ENCODE measurements at regions of chr1 and their contacts with region 1.

Region 1: GRCh38 chr1:91650764-91651163 is 150.1 kb downstream of the CDC7 start:
- DNase-seq: no peak
- ATAC-seq: no peak
- H3K4me3 ChIP-seq: no peak overlapping the region
- H3K4me3 Mint-ChIP-seq: no peak overlapping the region
- H3K27ac ChIP-seq: no peak overlapping the region
- H3K27ac Mint-ChIP-seq: no peak overlapping the region
- H3K4me1 ChIP-seq: peaks cover 8% of the 10 kb centered on the region
- H3K4me1 Mint-ChIP-seq: peaks cover 13% of the 10 kb centered on the region
- H3K27me3 ChIP-seq: no peaks in the 10 kb centered on the region
- H3K27me3 Mint-ChIP-seq: no peaks in the 10 kb centered on the region
- CTCF ChIP-seq: no peak

Region 2: DNA sequence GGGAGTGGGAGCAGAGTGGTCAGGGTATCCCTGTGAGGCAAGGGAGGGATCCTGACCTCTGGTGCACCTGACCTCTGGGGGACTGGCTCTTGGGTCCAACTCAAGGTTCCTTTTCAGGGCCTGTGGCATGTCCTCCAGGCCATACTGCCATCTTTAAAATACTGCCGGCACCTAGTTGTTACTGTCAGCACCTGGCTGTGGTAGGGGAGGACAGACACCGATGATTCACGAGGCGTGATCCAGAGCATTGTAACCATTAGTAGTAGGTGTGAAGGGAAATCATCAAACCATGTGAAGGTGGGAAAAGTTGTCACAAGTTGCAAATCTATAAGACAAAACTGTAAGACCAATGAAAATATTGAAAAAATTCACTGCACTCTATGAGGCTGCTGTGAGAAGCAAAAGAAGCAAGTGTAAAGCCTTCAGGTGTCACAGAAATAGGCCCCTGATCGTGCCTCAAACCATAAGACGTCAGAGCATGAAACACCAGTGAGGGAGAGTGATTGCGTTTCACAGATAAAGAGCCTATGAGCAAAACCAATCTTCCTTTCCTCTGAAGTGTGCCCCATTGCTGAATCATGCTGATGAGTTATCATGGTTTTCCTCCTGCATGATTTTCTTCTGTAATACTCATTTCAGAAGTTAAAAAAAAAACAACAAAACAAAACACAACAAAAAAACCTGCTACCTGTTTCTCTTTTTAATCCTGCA is 94.8 kb before region 1 on chr1:
- CTCF ChIA-PET with region 1: no interaction called
- POLR2A ChIA-PET with region 1: no interaction called
- intact Hi-C with region 1: no loop called
- DNase-seq: peak; percentile 29 to 96 (median 59)
- ATAC-seq: peak; percentile 87
- H3K4me3 ChIP-seq: no peak overlapping the region
- H3K4me3 Mint-ChIP-seq: no peak overlapping the region
- H3K27ac ChIP-seq: peak overlapping the region; percentile 49 to 90
- H3K27ac Mint-ChIP-seq: peak overlapping the region; percentile 92
- H3K4me1 ChIP-seq: peaks cover 54% of the 10 kb centered on the region
- H3K4me1 Mint-ChIP-seq: peaks cover 82% of the 10 kb centered on the region
- H3K27me3 ChIP-seq: no peaks in the 10 kb centered on the region
- H3K27me3 Mint-ChIP-seq: no peaks in the 10 kb centered on the region
- CTCF ChIP-seq: no peak

Region 3: DNA sequence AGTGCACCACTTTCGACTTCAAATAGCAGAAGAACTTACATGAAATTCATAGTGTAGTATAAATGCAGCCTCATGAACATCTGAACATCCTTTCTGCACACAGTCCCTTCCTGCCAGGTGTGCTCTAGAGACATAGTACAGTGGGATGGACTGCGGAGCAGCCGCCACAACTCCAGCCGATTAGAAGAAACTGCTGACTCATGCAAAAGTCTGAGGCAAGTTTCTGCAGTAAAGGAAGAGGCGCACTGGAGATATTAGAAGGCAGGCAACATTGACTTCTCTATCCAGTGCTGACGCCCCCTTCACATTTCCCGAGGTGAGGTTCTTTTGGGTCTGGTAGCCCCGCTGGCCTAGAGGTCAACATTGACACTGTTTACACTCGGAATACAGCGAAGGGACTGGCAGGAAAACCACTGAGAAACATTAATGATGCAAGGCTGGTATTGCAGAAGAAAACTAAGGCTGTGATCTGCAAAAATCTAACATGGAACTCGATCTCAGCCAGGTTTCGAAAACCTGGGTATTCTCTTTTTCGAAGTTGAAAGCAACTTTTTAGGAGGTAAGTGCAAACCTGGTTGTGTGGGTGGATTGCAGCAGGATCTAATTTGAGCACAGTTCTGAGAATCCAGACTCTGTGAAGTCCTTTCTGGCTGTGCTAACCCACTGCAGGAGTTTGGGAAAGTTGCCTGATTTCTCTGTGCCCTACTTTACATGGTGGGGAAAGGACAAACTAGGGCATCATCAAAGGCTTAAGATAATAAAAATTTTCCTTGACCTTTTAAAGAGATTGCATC is 59.4 kb before region 1 on chr1:
- CTCF ChIA-PET with region 1: no interaction called
- POLR2A ChIA-PET with region 1: no interaction called
- intact Hi-C with region 1: loop called in 1 of 2 experiments (anchors 10 kb)
- DNase-seq: peak in 1 of 9 experiments; percentile 12
- ATAC-seq: no peak
- H3K4me3 ChIP-seq: peak overlapping the region in 1 of 2 experiments; percentile 16
- H3K4me3 Mint-ChIP-seq: peak overlapping the region; percentile 53
- H3K27ac ChIP-seq: no peak overlapping the region
- H3K27ac Mint-ChIP-seq: no peak overlapping the region
- H3K4me1 ChIP-seq: peaks cover 11% of the 10 kb centered on the region
- H3K4me1 Mint-ChIP-seq: peaks cover 17% of the 10 kb centered on the region
- H3K27me3 ChIP-seq: no peaks in the 10 kb centered on the region
- H3K27me3 Mint-ChIP-seq: no peaks in the 10 kb centered on the region
- CTCF ChIP-seq: no peak

Measured in CD8-positive, alpha-beta T cell (primary cell).